ENCODE measurements at regions of chr11 and their contacts with region 1.

Region 1: DNA sequence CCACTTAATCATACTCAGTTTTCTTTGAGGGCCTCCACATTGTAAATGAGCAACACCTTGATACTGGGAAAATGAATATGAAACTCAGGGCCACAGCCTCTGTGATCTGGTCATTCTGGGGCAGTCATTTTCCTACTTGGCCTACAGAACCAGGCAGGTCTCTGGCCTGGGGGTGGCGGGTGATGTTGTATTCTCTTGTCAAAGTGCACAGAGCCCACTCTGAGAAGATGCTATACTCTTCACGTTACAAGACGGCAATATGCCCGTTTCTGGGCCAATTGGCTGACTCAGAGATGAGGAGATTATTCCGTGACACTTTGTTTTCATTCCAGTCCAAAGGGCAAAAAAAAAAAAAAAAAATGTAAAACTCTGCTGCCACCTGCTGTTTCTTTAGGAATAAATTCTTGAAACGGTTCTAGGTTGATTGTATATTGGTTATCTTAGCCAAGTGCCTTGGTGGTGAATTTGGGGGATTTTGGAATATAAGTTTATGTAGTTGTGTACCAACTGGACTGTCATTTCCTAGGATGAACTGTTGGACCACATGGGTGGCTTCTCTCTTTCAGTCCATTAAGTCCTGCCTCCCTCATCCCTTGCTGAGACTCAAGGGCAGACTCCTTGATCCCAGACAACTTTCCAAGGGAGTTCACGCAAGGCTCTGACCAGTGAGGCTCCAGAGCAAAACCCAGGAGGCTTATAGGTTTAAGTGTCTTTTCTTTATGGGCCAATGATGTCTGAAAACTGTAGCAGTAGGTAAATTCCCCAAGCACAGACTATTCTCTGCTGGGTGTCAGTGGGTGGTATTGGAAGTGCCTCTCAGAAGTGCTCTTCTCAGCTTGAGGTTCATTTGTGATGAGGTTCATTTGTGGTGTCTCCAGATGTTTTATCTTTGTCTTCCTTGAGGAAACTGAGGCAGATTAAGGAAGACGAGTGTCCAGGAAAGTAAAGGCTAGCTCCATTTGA is 18.2 kb downstream of the ADM start:
- DNase-seq: peak; percentile 31
- H3K4me3 Mint-ChIP-seq: no peak overlapping the region
- H3K27ac Mint-ChIP-seq: peak overlapping the region; percentile 86
- H3K4me1 Mint-ChIP-seq: peaks cover 16% of the 10 kb centered on the region
- H3K27me3 Mint-ChIP-seq: peaks cover 27% of the 10 kb centered on the region

Region 2: GRCh38 chr11:9972989-9973388 is 350.1 kb before region 1 on chr11:
- intact Hi-C with region 1: loop called (anchors 5 kb)
- DNase-seq: no peak
- H3K4me3 Mint-ChIP-seq: no peak overlapping the region
- H3K27ac Mint-ChIP-seq: no peak overlapping the region
- H3K4me1 Mint-ChIP-seq: peaks cover 2% of the 10 kb centered on the region
- H3K27me3 Mint-ChIP-seq: no peaks in the 10 kb centered on the region

Region 3: DNA sequence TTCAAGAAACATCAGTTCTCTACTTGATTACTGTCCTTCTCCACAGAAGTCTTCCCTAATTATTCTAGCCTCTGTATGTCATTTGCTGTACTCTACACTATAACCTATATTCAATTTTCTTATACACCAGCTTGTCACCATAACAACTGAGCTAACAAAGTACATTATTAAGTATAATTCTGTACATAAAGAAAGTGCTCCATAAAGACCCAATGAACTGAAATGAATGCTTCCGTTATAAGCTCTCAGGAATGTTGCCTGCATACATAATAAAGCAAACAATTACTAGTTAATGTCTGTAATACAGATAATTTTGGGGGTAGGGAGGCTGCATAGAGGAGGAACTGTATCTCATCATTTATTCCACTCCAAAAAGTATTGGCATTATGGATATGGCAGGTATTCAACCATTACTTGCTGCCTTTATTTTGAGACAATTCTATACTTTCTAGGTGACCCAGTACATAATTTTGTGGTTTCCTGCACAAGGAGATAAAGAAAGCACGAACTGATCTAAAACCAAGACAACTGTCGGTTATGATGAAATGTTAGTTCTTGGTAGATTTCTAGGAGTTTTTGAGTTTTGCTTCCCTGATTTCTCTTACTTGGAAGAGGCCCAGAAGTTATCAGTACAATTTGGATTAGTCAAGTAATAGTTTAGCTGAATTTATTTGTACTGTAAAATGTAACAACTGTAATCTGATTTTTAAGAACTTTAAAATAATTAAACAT is 231.6 kb before region 1 on chr11:
- intact Hi-C with region 1: loop called (anchors 5 kb)
- DNase-seq: no peak
- H3K4me3 Mint-ChIP-seq: no peak overlapping the region
- H3K27ac Mint-ChIP-seq: no peak overlapping the region
- H3K4me1 Mint-ChIP-seq: peaks cover 17% of the 10 kb centered on the region
- H3K27me3 Mint-ChIP-seq: peaks cover 7% of the 10 kb centered on the region

Region 4: GRCh38 chr11:10208131-10208575 is 115.0 kb before region 1 on chr11:
- intact Hi-C with region 1: loop called (anchors 1 kb)
- DNase-seq: no peak
- H3K4me3 Mint-ChIP-seq: no peak overlapping the region
- H3K27ac Mint-ChIP-seq: no peak overlapping the region
- H3K4me1 Mint-ChIP-seq: no peaks in the 10 kb centered on the region
- H3K27me3 Mint-ChIP-seq: peaks cover 21% of the 10 kb centered on the region

Region 5: GRCh38 chr11:10405855-10406592 is 82.9 kb after region 1 on chr11:
- intact Hi-C with region 1: no loop called
- DNase-seq: no peak
- H3K4me3 Mint-ChIP-seq: no peak overlapping the region
- H3K27ac Mint-ChIP-seq: no peak overlapping the region
- H3K4me1 Mint-ChIP-seq: peaks cover 13% of the 10 kb centered on the region
- H3K27me3 Mint-ChIP-seq: no peaks in the 10 kb centered on the region

Region 6: DNA sequence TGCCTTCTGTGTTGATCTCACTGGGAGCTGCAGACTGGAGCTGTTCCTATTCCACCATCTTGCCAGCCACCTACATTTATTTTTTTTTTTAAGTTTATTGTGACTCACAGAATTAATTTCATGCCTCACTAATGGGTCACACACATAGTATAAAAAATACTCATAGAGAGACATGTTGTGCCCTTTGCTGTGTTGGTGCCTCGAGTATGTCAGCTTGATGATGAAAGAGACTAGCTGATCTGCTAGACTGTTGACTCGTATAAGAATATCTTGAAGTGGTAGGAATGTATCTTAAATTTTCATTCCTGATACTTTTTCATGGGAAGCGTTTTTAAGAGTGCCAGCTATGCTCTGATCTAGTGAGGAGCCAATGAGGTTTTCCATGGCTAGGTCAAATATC is 103.4 kb after region 1 on chr11:
- intact Hi-C with region 1: no loop called
- DNase-seq: no peak
- H3K4me3 Mint-ChIP-seq: no peak overlapping the region
- H3K27ac Mint-ChIP-seq: no peak overlapping the region
- H3K4me1 Mint-ChIP-seq: no peaks in the 10 kb centered on the region
- H3K27me3 Mint-ChIP-seq: peaks cover 38% of the 10 kb centered on the region

Region 7: DNA sequence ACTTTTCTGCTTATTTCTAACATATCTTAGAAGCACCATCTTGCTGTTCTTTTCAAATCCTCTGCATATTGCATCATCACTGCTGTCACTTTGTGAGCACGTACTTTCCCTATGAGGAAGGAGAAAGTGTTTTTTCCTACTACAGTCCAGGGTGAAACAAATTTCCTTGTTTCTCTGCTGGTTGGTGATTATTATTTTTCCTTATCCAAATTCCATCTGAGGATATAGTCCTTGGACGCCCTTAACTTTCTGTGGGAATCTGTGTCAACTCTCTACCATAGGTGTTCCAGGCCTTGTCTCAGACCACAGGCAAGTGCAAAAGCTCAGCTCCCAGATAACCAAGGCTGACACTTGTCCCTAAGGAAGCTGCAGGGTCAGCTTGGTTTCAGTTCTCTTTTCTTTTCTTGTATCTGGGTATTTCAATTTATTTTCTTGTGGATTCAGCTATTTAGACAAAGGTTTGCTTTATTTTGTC is 274.8 kb after region 1 on chr11:
- intact Hi-C with region 1: no loop called
- DNase-seq: no peak
- H3K4me3 Mint-ChIP-seq: no peak overlapping the region
- H3K27ac Mint-ChIP-seq: no peak overlapping the region
- H3K4me1 Mint-ChIP-seq: peaks cover 4% of the 10 kb centered on the region
- H3K27me3 Mint-ChIP-seq: no peaks in the 10 kb centered on the region

Region 8: GRCh38 chr11:10742471-10743208 is 419.5 kb after region 1 on chr11:
- intact Hi-C with region 1: loop called (anchors 2 kb)
- DNase-seq: no peak
- H3K4me3 Mint-ChIP-seq: peak overlapping the region; percentile 3
- H3K27ac Mint-ChIP-seq: peak overlapping the region; percentile 0
- H3K4me1 Mint-ChIP-seq: peaks cover 32% of the 10 kb centered on the region
- H3K27me3 Mint-ChIP-seq: no peaks in the 10 kb centered on the region